ENCODE measurements at regions of chr17 and their contacts with region 1.

Region 1: DNA sequence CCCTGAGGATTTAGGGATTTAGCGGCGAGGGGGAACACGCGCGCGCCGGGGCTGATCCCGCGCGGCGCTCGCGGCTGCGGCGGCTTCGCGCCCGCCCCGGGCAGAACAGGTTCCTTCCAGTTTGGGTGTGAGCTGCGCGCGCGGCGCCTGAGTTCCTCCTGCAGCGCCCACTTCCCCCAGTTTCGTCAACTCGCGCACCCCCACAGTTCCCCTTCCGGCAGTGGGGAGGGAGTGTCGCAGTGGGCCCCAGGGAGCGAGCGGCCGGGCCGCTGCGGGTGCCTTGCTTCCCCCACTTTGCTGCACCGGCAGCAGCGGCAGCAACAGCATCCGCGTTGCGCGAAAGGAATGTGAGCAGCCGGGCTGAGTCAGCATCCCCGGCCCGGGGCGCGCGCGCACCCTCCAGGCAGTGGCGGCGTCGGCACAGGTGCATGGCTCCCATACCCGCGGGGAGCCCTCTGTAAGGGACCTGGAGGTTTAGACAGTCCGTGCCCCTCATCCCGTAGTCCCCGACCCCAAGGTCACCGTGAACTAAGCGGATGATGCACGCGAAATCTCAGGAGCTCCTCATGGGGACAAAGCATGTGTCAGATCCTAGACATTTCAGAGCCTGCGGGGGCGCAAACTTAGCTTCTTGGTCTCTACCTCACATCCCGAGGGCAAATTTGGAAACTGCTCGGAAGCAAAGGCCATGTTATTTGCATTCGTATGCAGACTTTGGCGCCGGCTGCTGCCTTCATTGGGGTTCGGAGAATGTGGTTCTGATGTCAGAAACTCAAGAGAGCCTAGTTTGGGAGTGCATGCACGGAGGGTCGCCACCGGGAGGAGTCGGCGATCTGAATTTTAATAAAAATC is 775 bp downstream of the ARSG start:
- DNase-seq: peak; percentile 93
- ATAC-seq: peak; percentile 78
- H3K4me3 Mint-ChIP-seq: peak overlapping the region; percentile 75
- H3K27ac Mint-ChIP-seq: peak overlapping the region; percentile 90
- H3K4me1 Mint-ChIP-seq: peaks cover 44% of the 10 kb centered on the region
- H3K27me3 Mint-ChIP-seq: no peaks in the 10 kb centered on the region

Region 2: GRCh38 chr17:68247445-68248198 is 44.4 kb before region 1 on chr17 and contains the start of gene AMZ2:
- POLR2A ChIA-PET with region 1: interaction called, 15 read pairs
- DNase-seq: peak; percentile 100
- ATAC-seq: peak; percentile 87
- H3K4me3 Mint-ChIP-seq: peak within 1 kb of the TSS; percentile 89
- H3K27ac Mint-ChIP-seq: peak within 1 kb of the TSS; percentile 98
- H3K4me1 Mint-ChIP-seq: peaks cover 30% of the 10 kb centered on the region
- H3K27me3 Mint-ChIP-seq: no peaks in the 10 kb centered on the region
- total RNA-seq, gene AMZ2: 84.2 to 84.5 TPM

Region 3: DNA sequence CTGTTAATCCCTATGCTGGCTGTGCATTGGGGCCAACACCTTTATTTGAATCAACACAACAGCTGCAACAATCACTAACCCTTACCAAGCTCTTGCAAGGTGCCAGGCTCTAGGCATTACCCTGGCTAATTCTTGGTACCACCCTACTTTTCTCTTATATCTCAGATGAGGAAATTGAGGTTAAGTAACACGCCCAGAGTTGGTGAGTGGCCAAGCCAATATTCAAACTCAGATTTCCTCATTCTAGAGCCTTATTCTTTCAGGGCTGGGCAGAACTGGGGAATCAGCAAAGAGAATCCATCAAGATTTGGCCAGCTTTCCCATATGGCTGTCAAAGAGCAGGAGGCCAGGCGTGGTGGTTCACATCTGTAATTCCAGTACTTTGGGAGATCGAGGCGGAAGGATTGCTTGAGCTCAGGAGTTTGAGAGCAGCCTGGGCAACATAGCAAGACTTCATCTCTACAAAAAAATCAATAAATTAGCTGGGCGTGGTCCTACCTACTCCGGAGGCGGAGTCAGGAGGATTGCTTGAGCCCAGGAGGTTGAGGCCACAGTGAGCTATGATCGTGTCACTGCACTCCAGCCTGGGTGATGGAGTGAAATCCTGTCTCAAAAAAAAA is 23.0 kb after region 1 on chr17:
- POLR2A ChIA-PET with region 1: interaction called, 12 read pairs
- DNase-seq: no peak
- ATAC-seq: peak; percentile 78
- H3K4me3 Mint-ChIP-seq: peak overlapping the region; percentile 69
- H3K27ac Mint-ChIP-seq: peak overlapping the region; percentile 82
- H3K4me1 Mint-ChIP-seq: peaks cover 43% of the 10 kb centered on the region
- H3K27me3 Mint-ChIP-seq: no peaks in the 10 kb centered on the region

Region 4: GRCh38 chr17:68356520-68356919 is 64.5 kb after region 1 on chr17:
- POLR2A ChIA-PET with region 1: interaction called, 37 read pairs
- DNase-seq: peak; percentile 65
- ATAC-seq: peak; percentile 94
- H3K4me3 Mint-ChIP-seq: peak overlapping the region; percentile 78
- H3K27ac Mint-ChIP-seq: peak overlapping the region; percentile 86
- H3K4me1 Mint-ChIP-seq: peaks cover 52% of the 10 kb centered on the region
- H3K27me3 Mint-ChIP-seq: no peaks in the 10 kb centered on the region

Region 5: DNA sequence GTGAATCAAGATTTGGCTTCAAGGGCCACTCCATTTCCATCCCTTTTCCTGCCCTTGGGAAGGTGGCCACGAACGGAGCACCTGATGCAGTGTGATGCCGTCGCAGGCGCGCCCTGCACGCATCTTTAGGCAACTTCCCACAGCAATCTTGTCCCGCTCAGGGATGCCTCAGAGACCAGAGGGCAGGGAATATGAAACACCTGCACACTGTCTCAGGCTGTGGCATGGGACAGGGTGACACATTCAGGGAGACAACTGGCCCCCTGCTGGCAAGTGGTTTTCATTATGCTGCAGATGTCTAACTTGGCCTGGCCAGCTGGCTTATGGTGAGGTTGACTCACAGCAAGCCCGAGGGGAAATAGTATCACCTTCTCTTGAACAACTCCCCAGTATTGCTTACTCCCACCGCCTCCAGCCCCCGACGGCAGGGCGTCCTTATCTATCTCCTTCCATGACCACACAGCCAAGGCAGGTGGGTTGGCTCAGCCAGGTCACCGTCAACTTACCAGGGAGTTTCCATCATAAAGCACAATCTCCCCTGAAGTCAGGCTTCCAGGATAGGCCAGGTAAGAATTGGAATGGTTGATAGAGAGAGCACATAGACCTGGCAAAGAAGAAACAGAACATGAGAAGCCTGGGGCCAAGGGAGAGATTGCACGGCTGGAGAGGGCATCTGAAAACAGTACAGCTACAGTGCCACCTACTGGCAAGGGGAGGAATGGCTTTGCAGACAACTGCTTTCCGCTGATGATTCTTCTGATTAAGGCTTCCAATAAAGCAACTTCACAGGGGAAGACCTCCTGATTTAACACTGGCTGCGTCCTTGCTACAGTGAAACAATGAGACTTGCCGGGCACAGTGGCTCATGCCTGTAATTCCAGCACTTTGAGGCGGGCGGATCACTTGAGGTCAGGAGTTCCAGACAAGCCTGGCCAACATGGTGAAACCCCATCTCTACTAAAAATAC is 144.1 kb after region 1 on chr17:
- POLR2A ChIA-PET with region 1: interaction called, 31 read pairs
- DNase-seq: peak; percentile 77
- ATAC-seq: peak; percentile 69
- H3K4me3 Mint-ChIP-seq: peak overlapping the region; percentile 49
- H3K27ac Mint-ChIP-seq: peak overlapping the region; percentile 86
- H3K4me1 Mint-ChIP-seq: peaks cover 38% of the 10 kb centered on the region
- H3K27me3 Mint-ChIP-seq: no peaks in the 10 kb centered on the region